SK-N-SH (cell line): ENCODE measurements at regions of chr2 and their contacts with region 1.

Region 1: GRCh38 chr2:204191574-204192335 is 255.2 kb downstream of the ICOS start:
- DNase-seq: no peak
- H3K4me3 ChIP-seq: no peak overlapping the region
- H3K27ac ChIP-seq: peak overlapping the region in 1 of 2 experiments; percentile 62; a peak in 2 of 4 replicates
- H3K4me1 ChIP-seq: peaks cover 0 to 30% of the 10 kb centered on the region in 2 experiments; a peak in 2 of 4 replicates
- H3K27me3 ChIP-seq: no peaks in the 10 kb centered on the region
- CTCF ChIP-seq: no peak
- EP300 ChIP-seq: no peak
- RAD21 ChIP-seq: no peak

Region 2: GRCh38 chr2:204166961-204167360 is 24.8 kb before region 1 on chr2:
- CTCF ChIA-PET with region 1: no interaction called
- POLR2A ChIA-PET with region 1: no interaction called
- DNase-seq: no peak
- H3K4me3 ChIP-seq: no peak overlapping the region
- H3K27ac ChIP-seq: no peak overlapping the region
- H3K4me1 ChIP-seq: peaks cover 0 to 7% of the 10 kb centered on the region in 2 experiments; a peak in 1 of 4 replicates
- H3K27me3 ChIP-seq: no peaks in the 10 kb centered on the region
- CTCF ChIP-seq: no peak
- EP300 ChIP-seq: no peak
- RAD21 ChIP-seq: no peak

Region 3: DNA sequence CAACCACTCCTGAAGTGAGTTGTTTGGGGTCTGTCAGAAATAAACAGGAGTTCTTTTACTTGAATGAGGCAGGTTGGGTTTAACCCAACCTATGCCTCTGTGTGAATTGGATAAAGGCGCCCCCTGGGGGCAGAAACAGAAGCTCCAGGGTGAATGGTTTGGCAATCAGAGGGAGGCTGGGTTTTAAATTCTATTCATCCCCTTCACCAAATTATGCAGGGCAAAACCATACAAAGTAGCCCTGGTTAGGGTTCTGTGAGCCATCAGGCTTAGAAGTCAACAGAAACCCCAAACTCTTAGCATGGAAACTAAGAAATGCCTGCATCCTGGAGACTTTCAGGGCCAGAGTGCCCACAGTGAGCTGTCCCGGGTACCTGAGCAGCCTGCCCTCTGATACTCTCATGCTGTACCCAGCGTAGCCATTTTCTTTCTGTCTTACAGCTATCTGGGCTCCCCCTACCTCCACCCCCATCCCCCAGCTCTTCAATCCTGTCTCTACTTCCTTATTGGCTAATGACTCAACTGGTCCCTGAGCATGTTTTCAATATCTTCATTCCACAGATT is 13.7 kb before region 1 on chr2:
- CTCF ChIA-PET with region 1: interaction called, 12 read pairs
- POLR2A ChIA-PET with region 1: interaction called, 7 read pairs
- DNase-seq: no peak
- H3K4me3 ChIP-seq: no peak overlapping the region; a peak in 1 of 4 replicates
- H3K27ac ChIP-seq: peak overlapping the region in 1 of 2 experiments; percentile 50; a peak in 1 of 4 replicates
- H3K4me1 ChIP-seq: peaks cover 0 to 22% of the 10 kb centered on the region in 2 experiments; a peak in 2 of 4 replicates
- H3K27me3 ChIP-seq: no peaks in the 10 kb centered on the region
- CTCF ChIP-seq: peak; percentile 57
- EP300 ChIP-seq: no peak
- RAD21 ChIP-seq: no peak